ENCODE measurements at regions of chr10 and their contacts with region 1.

Region 1: GRCh38 chr10:58513188-58514110 is 777 bp downstream of the BICC1 start:
- DNase-seq: no peak
- ATAC-seq: no peak
- H3K4me3 ChIP-seq: no peak overlapping the region
- H3K27ac ChIP-seq: no peak overlapping the region
- H3K4me1 ChIP-seq: peaks cover 0 to 4% of the 10 kb centered on the region in 2 experiments; a peak in 1 of 5 replicates
- H3K27me3 ChIP-seq: no peaks in the 10 kb centered on the region
- CTCF ChIP-seq: no peak
- EP300 ChIP-seq: no peak
- POLR2A ChIP-seq: no peak
- RAD21 ChIP-seq: no peak

Region 2: GRCh38 chr10:58275908-58276307 is 237.5 kb before region 1 on chr10:
- CTCF ChIA-PET with region 1: no interaction called
- POLR2A ChIA-PET with region 1: no interaction called
- in situ Hi-C with region 1: no loop called
- intact Hi-C with region 1: no loop called
- DNase-seq: no peak
- ATAC-seq: peak; percentile 47; the same call in 2 of the 3 replicates
- H3K4me3 ChIP-seq: no peak overlapping the region
- H3K27ac ChIP-seq: no peak overlapping the region
- H3K4me1 ChIP-seq: peaks cover 0 to 3% of the 10 kb centered on the region in 2 experiments; a peak in 1 of 5 replicates
- H3K27me3 ChIP-seq: no peaks in the 10 kb centered on the region
- CTCF ChIP-seq: no peak
- EP300 ChIP-seq: no peak
- POLR2A ChIP-seq: no peak
- RAD21 ChIP-seq: no peak

Region 3: DNA sequence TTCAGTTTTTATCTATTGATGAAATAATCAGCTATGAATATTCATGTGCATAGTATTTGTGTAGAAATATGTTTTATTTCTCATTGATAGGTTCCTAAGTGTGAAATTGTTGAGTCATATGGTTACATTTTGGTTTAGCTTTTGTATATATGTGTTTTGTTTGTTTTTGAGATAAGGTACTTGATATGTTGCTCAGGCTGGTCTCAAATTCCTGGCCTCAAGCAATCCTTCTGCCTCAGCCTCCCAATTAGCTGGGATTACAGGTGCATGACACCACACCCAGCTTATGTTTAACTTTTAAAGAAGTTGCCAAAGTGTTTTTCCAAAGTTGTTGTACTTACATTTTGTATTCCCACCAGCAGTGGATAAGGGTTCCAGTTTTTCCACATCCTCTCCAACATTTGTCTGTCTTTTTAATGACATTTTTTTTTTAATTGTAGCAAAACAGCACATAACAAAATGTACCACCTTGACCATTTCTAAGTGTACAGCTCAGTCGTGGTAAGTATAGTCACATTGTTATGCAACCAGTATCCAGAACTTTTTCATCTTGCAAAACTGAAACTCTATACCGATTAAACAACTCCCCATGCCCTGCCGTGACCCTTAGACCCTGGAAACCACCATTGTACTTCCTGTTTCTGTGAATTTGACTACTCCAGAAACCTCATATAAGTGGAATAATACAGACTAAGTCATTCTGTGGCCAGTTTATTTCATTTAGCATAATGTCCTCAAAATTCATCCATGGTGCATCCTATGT is 191.2 kb before region 1 on chr10:
- CTCF ChIA-PET with region 1: no interaction called
- POLR2A ChIA-PET with region 1: no interaction called
- in situ Hi-C with region 1: no loop called
- intact Hi-C with region 1: loop called (anchors 10 kb)
- DNase-seq: peak in 1 of 4 experiments; percentile 38
- ATAC-seq: peak; percentile 26; the same call in 2 of the 3 replicates
- H3K4me3 ChIP-seq: no peak overlapping the region
- H3K27ac ChIP-seq: peak overlapping the region; percentile 11; the same call in 1 of the 3 replicates
- H3K4me1 ChIP-seq: peaks cover 5 to 18% of the 10 kb centered on the region in 2 experiments; a peak in 4 of 5 replicates
- H3K27me3 ChIP-seq: no peaks in the 10 kb centered on the region
- CTCF ChIP-seq: no peak
- EP300 ChIP-seq: no peak
- POLR2A ChIP-seq: no peak
- RAD21 ChIP-seq: no peak

Region 4: DNA sequence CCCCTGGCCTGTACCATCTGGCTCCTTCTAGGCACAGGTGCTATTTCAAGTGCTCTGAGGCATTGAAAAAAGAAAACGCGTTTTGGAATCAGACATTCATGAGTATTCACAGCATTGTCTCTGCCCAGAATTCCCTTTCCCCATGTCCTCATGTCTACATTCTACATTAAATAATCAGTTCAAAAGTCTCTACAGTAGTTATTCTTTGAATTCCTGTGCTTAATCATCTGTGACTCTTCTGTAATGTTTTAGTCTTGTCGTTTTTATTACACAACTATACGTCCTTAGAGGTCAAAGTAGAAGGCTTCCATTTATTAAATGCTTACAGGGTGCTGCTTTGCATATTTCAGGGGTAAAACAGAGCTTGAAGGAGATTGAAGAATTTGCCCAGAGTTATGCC is 94.9 kb after region 1 on chr10:
- CTCF ChIA-PET with region 1: no interaction called
- POLR2A ChIA-PET with region 1: no interaction called
- in situ Hi-C with region 1: no loop called
- intact Hi-C with region 1: no loop called
- DNase-seq: no peak
- ATAC-seq: no peak
- H3K4me3 ChIP-seq: no peak overlapping the region
- H3K27ac ChIP-seq: no peak overlapping the region
- H3K4me1 ChIP-seq: no peaks in the 10 kb centered on the region
- H3K27me3 ChIP-seq: no peaks in the 10 kb centered on the region
- CTCF ChIP-seq: no peak
- EP300 ChIP-seq: no peak
- POLR2A ChIP-seq: no peak
- RAD21 ChIP-seq: no peak

Measured in K562 (cell line).